Testis (tissue), 5 donors: ENCODE measurements at regions of chr4 and their contacts with region 1.

Region 1: GRCh38 chr4:176340871-176341685 is 21.3 kb downstream of the SPCS3 start:
- DNase-seq: peak; percentile 21
- H3K4me3 ChIP-seq: no peak overlapping the region
- H3K27ac ChIP-seq: no peak overlapping the region
- H3K4me1 ChIP-seq: no peaks in the 10 kb centered on the region
- H3K27me3 ChIP-seq: no peaks in the 10 kb centered on the region
- CTCF ChIP-seq: peak in 1 of 3 experiments; percentile 12
- POLR2A ChIP-seq: no peak

Region 2: DNA sequence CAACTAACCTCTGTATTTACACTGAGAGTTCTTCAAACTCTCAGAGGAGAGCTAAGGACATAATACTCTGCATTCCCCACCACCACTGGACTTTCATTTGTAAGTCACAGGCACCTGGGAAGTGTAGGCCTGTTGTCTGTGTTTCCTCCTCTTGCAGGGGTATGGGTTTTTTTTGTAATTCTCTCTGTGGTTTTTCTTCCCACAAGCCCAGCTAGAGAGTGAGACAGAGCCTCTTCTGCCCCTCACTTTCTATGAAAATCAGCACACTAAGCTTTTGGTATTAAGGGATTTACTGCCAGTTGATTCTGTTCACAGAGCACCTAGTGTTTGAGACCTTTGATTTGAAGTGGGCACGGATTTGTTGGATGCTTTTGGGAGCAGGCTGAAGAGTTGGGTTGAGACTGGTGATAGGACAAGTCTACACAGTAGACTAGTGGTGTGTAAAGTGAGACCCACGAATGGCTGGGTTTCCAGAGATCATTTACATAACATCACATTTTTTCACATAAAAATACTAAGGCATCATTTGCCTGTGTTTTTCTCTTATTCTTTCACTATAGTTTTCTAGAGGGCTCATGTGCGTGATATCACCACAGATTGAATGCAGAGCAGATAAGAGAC is 304.4 kb before region 1 on chr4:
- intact Hi-C with region 1: loop called (anchors 5 kb)
- DNase-seq: no peak
- H3K4me3 ChIP-seq: no peak overlapping the region
- H3K27ac ChIP-seq: no peak overlapping the region
- H3K4me1 ChIP-seq: no peaks in the 10 kb centered on the region
- H3K27me3 ChIP-seq: no peaks in the 10 kb centered on the region
- CTCF ChIP-seq: no peak
- POLR2A ChIP-seq: no peak